ENCODE measurements at regions of chr7 and their contacts with region 1.

Region 1: GRCh38 chr7:134547397-134548054 is 1.4 kb upstream of the AKR1B15 start:
- DNase-seq: peak; percentile 60
- H3K4me3 ChIP-seq: peak overlapping the region; percentile 37 to 57
- H3K27ac ChIP-seq: no peak overlapping the region
- H3K4me1 ChIP-seq: peaks cover 0 to 4% of the 10 kb centered on the region in 2 experiments; a peak in 1 of 4 replicates
- H3K27me3 ChIP-seq: peaks cover 57% of the 10 kb centered on the region
- CTCF ChIP-seq: peak; percentile 100
- EP300 ChIP-seq: no peak
- RAD21 ChIP-seq: peak; percentile 68

Region 2: GRCh38 chr7:134458806-134459698 is 88.5 kb before region 1 on chr7 and contains the start of gene AKR1B1:
- CTCF ChIA-PET with region 1: interaction called, 19 read pairs
- POLR2A ChIA-PET with region 1: no interaction called
- DNase-seq: peak; percentile 99
- H3K4me3 ChIP-seq: peak within 1 kb of the TSS; percentile 90 to 92
- H3K27ac ChIP-seq: peak within 1 kb of the TSS; percentile 62 to 77
- H3K4me1 ChIP-seq: peaks cover 5 to 11% of the 10 kb centered on the region in 2 experiments; a peak in 3 of 4 replicates
- H3K27me3 ChIP-seq: no peaks in the 10 kb centered on the region
- CTCF ChIP-seq: peak; percentile 80
- EP300 ChIP-seq: peak in 1 of 2 experiments; percentile 11; a peak in 1 of 4 replicates
- RAD21 ChIP-seq: no peak
- polyA plus RNA-seq, gene AKR1B1: 216 and 224 TPM in 2 replicates

Region 3: GRCh38 chr7:134527979-134528371 is 19.6 kb before region 1 on chr7:
- CTCF ChIA-PET with region 1: interaction called, 24 read pairs
- POLR2A ChIA-PET with region 1: no interaction called
- DNase-seq: no peak
- H3K4me3 ChIP-seq: no peak overlapping the region
- H3K27ac ChIP-seq: no peak overlapping the region
- H3K4me1 ChIP-seq: peaks cover 0 to 5% of the 10 kb centered on the region in 2 experiments; a peak in 1 of 4 replicates
- H3K27me3 ChIP-seq: peaks cover 31% of the 10 kb centered on the region
- CTCF ChIP-seq: no peak
- EP300 ChIP-seq: no peak
- RAD21 ChIP-seq: no peak

Region 4: DNA sequence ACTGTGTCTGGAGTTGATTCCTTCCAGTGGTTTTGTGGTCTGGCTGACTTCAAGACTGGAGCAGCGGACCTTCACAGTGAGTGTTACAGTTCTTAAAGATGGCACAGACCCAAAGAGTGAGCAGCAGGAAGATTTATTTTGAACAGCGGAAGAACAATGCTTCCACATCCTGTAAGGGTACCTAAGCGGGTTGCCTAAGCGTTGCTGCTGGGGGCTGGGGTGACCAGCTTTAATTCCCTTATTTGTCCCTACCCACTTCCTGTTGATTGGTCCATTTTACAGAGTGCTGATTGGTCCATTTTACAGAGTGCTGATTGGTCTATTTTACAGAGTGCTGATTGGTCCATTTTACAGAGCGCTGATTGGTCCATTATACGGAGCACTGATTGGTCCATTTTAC is 14.6 kb after region 1 on chr7:
- CTCF ChIA-PET with region 1: interaction called, 52 read pairs
- POLR2A ChIA-PET with region 1: no interaction called
- DNase-seq: no peak
- H3K4me3 ChIP-seq: no peak overlapping the region
- H3K27ac ChIP-seq: no peak overlapping the region
- H3K4me1 ChIP-seq: peaks cover 0 to 2% of the 10 kb centered on the region in 2 experiments; a peak in 1 of 4 replicates
- H3K27me3 ChIP-seq: peaks cover 8% of the 10 kb centered on the region; the same call in 1 of the 2 replicates
- CTCF ChIP-seq: no peak
- EP300 ChIP-seq: no peak
- RAD21 ChIP-seq: no peak

Region 5: DNA sequence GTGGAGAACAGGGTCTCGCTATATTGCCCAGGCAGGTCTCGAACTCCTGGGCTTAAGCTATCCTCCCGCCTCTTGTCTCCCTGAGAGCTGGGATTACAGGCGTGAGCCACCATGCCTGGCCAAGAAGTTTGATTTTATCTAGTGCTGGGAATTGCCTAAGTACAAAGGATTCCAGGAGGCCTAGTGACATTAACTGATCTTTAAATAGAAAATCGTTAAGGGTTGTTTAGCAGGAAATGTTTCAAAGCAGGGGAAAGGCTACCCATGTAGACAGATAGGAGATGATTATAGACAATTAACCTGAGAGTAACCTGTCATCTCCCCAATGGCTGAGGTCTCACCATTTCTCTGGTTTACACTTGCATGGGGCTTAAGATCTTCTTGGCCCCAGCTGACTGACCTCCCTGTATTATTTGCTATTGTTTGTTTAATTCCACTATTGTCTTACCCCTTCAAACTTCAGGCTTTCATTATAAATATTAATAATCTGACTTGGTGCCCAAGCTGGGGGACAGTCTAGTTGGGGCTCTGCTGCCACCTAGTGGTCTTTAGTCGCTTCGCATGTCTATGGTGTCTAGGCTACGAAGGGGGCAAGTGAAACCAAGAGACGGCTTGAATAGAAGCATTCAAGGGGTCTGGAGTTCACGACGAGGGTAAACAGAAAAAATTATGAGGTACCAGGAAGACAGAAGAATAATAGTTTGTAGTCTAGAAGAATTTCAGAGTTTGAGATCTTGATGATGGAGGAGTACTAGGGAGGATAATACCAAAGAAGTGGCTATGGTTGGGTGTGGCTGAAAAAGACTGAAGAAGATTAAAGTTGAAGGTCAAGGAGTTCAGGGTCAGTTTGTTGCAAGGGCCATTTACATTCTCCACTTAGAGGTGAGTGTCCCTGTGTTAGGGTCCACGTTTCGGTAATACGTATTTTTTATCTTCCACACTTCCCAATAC is 58.7 kb after region 1 on chr7:
- CTCF ChIA-PET with region 1: interaction called, 21 read pairs
- POLR2A ChIA-PET with region 1: no interaction called
- DNase-seq: peak; percentile 66
- H3K4me3 ChIP-seq: peak overlapping the region in 1 of 2 experiments; percentile 16; a peak in 1 of 4 replicates
- H3K27ac ChIP-seq: no peak overlapping the region; a peak in 1 of 4 replicates
- H3K4me1 ChIP-seq: no peaks in the 10 kb centered on the region; a peak in 2 of 4 replicates
- H3K27me3 ChIP-seq: no peaks in the 10 kb centered on the region
- CTCF ChIP-seq: peak; percentile 100
- EP300 ChIP-seq: no peak
- RAD21 ChIP-seq: peak; percentile 92